ENCODE measurements at regions of chr5 and their contacts with region 1.

Region 1: DNA sequence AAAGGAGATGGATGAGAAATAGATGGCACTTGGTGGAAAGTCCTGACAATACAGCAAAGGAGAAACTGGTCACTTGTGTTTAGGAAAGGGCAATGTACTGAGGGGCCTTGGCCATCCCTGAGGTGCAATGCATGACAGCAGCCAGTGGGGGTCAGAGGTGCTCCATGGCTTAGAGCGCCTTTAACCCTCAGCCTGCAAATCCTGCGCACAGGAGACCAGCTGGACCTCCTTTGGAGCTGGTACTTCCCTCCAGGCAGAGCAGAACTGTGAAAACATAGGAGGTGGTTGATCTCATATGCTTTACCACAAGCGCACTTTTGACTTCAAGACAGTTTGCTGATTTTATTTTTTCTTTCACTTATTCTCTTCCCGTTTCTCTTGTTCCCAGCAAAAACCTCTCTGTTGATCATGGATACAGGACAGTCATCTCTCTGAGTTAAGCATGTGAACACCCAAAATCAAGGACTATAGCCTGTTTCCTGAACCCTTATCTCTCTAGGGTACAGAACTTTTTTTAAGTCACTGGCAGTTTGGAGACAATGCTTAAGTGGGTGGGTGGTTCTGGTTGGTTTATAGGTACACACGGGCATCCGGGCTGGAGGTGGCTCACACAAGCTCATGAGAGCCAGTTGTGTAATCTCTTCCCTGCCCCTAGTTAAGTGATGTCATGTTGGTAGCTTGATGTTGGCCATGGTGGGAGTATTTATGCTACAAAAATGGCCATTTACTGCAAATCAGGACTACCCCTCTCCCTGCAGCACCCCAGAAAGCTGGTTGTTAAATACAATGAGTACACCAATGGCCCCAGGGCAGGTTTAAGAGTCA is 37.6 kb upstream of the ANKRD55 start:
- DNase-seq: peak; percentile 62
- ATAC-seq: peak; percentile 99
- H3K4me3 ChIP-seq: no peak overlapping the region
- H3K27ac ChIP-seq: no peak overlapping the region
- H3K4me1 ChIP-seq: no peaks in the 10 kb centered on the region
- H3K27me3 ChIP-seq: no peaks in the 10 kb centered on the region
- CTCF ChIP-seq: peak; percentile 82 to 99 (median 96)
- POLR2A ChIP-seq: no peak
- RAD21 ChIP-seq: peak; percentile 96

Region 2: DNA sequence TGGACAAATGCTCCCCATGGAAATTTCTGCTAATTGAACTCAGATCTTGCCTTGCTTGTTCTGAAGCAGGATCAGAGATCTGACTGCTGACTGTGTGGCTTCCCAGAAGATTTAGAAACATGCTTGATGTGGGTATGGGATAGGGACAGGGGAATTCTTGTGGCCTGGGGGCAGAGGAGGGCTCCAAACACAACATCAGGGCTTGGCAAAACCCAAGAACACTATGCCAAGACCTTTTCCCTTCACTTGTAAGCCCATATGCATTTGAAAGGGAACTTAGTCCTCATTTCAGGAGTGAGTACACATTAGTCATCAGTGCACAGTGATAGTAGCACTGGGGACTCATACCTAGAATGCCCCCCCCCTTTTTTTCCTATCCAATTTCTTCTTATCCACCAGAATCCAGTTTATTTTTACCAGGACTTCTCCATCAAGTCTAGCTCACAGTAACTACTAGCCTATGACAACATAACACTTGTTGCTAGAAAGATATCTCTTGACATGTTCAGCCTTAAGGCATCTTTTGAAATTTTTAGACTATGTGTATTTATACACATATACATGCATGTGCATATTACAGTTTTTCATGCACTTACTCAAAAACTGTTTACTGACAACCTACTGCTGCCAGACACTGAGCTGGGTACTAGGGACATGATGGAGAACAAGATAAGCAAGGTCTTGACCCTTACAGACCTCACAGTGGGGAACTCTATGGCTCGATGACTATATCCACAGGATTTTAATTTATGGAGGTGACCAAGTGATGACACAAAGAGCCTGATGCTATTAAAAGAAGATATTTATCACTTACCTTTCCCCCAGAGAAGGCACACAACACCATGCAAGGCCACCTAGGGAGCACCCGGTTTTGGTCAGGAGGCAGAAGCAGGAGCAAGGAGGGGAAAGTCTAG is 386.3 kb after region 1 on chr5:
- CTCF ChIA-PET with region 1: no interaction called
- POLR2A ChIA-PET with region 1: no interaction called
- RAD21 ChIA-PET with region 1: no interaction called
- intact Hi-C with region 1: no loop called
- DNase-seq: no peak
- ATAC-seq: peak; percentile 53
- H3K4me3 ChIP-seq: no peak overlapping the region
- H3K27ac ChIP-seq: no peak overlapping the region
- H3K4me1 ChIP-seq: peaks cover 0 to 26% of the 10 kb centered on the region in 2 experiments; a peak in 2 of 4 replicates
- H3K27me3 ChIP-seq: peaks cover 4% of the 10 kb centered on the region; the same call in 1 of the 2 replicates
- CTCF ChIP-seq: no peak
- POLR2A ChIP-seq: no peak
- RAD21 ChIP-seq: no peak

Region 3: DNA sequence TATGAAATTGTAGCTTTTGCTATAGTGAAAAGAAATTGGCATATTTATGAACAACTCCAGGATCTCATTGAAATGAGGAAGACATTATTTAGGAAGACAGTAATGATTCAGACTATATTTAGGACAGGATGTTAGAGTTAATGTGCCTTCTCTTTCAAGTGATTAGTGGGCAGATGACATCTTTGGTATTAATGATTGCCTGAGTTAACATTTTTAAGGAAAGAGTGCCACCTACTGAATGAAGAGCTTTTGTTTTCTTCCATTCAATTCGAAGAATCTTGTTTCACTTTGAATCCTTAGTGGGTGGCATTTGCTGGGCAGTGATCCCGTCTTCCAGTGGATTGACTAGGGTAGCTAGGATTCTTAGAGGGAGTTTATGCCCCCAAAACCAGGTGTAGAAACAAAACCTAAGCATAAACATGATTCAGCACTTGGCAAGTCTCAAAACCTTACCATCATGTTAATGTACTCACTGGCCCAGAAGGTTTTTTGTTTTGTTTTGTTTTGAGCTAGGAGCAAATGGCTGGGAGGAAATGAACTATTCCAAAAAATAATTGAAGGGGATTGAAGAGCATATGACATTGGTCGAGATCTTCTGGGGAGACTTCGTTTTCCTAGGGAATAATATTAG is 567.7 kb after region 1 on chr5:
- CTCF ChIA-PET with region 1: interaction called, 124 read pairs
- POLR2A ChIA-PET with region 1: interaction called, 7 read pairs
- RAD21 ChIA-PET with region 1: interaction called, 14 to 24 read pairs
- intact Hi-C with region 1: loop called (anchors 1 kb)
- DNase-seq: no peak
- ATAC-seq: peak; percentile 60; the same call in 1 of the 2 replicates
- H3K4me3 ChIP-seq: no peak overlapping the region
- H3K27ac ChIP-seq: no peak overlapping the region
- H3K4me1 ChIP-seq: peaks cover 2 to 5% of the 10 kb centered on the region in 2 experiments; a peak in 2 of 4 replicates
- H3K27me3 ChIP-seq: no peaks in the 10 kb centered on the region
- CTCF ChIP-seq: peak in 2 of 3 experiments; percentile 60 to 65; a peak in 3 of 6 replicates
- POLR2A ChIP-seq: no peak
- RAD21 ChIP-seq: peak; percentile 85

Region 4: DNA sequence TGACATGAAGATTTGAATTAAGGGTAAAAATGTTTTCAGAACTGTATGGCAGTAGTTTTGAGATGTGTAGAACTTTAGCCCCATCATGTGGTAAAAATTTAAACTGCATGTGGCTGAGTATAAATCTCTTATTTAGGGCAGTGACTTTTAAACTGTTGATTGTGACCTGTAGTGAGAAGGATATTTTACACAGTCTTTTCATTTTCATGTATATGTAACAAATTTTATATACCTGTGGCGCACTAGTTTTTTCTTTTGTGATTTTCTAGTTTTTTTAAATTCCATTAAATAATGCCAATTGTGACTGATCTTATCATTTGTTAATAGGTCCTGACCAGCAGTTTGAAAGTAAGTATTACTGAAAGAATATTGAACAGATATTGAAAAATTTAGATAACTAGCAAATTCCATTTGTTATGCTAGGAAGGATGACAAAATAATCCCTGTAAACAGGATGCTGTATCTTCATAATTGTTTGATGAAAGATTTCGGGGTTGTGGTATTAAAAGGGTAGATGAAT is 950.3 kb after region 1 on chr5:
- CTCF ChIA-PET with region 1: interaction called, 3 read pairs
- POLR2A ChIA-PET with region 1: no interaction called
- RAD21 ChIA-PET with region 1: no interaction called
- intact Hi-C with region 1: loop called (anchors 2 kb)
- DNase-seq: peak; percentile 35
- ATAC-seq: peak; percentile 74
- H3K4me3 ChIP-seq: no peak overlapping the region
- H3K27ac ChIP-seq: peak overlapping the region; percentile 37; the same call in 1 of the 2 replicates
- H3K4me1 ChIP-seq: peaks cover 14 to 25% of the 10 kb centered on the region in 2 experiments
- H3K27me3 ChIP-seq: no peaks in the 10 kb centered on the region
- CTCF ChIP-seq: peak; percentile 43 to 89 (median 69); a peak in 5 of 6 replicates
- POLR2A ChIP-seq: no peak
- RAD21 ChIP-seq: peak; percentile 78

Region 5: DNA sequence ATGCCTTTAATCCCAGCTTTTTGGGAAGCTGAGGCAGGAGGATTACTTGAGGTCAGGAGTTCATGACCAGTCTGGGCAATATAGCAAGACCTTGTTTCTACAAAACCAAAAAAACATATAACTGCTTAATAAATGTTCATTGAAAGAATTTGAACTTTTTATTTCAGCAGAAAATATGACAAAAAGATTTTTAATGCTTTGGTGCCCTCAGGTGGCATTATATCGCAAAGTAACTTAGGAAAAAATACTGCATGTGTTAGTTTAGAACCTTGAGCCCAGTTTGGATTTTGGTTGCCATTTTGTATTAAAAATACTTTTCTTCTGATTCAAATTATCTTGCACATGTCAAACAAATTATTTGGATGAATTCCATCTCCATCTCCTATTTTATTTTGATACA is 1006.3 kb after region 1 on chr5:
- CTCF ChIA-PET with region 1: interaction called, 4 read pairs
- POLR2A ChIA-PET with region 1: no interaction called
- RAD21 ChIA-PET with region 1: interaction called in 1 of 2 experiments, 4 read pairs
- intact Hi-C with region 1: loop called (anchors 1 kb)
- DNase-seq: peak; percentile 13
- ATAC-seq: no peak
- H3K4me3 ChIP-seq: no peak overlapping the region
- H3K27ac ChIP-seq: no peak overlapping the region
- H3K4me1 ChIP-seq: peaks cover 0 to 4% of the 10 kb centered on the region in 2 experiments; a peak in 1 of 4 replicates
- H3K27me3 ChIP-seq: no peaks in the 10 kb centered on the region
- CTCF ChIP-seq: peak; percentile 18 to 55 (median 54); a peak in 4 of 6 replicates
- POLR2A ChIP-seq: no peak
- RAD21 ChIP-seq: peak; percentile 72